Activated B cell treated with CpG ODN at 0.5 μM for 24 hours (primary cell): ENCODE measurements at regions of chr15 and their contacts with region 1.

Region 1: DNA sequence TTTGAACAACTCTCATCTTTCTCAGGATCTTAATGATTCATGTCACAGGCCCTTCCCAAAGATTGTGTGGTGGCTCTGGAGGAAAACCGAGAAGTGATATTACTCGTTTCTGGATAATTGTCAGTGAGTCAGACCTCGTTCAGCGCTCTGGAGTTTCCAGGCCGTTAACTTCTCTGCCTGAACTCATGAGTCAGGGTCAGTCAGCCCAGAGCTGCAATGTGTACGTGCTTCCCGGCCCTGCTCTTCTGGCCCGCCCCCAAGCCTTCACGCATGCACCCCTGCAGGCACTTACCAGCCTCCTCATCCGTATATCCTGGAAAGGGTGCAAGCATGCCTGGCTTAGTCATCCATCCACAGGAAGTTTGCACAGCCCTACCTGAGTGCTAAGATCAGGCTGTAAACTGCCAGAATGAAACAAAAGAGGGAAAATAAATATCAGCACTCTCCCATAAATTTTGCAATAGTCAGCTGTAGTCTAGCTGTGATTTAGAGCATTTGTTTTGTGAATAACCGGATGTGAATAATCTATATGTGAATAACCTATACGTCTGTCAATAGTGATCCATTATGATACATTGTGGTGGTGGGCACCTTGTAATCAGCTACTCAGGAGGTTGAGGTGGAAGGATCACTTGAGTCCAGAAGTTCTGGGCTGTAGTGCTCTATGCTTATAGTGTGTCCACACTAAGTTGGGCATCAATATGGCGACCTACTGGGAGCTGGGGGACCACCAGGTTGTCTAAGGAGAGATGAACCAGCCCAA is 35.3 kb upstream of the SEMA4B start:
- DNase-seq: no peak
- ATAC-seq: peak; percentile 75
- H3K4me3 Mint-ChIP-seq: peak overlapping the region; percentile 44
- H3K27ac Mint-ChIP-seq: peak overlapping the region; percentile 56
- H3K4me1 Mint-ChIP-seq: peaks cover 49% of the 10 kb centered on the region
- H3K27me3 Mint-ChIP-seq: no peaks in the 10 kb centered on the region
- CTCF ChIP-seq: no peak

Region 2: GRCh38 chr15:90126022-90126421 is 39.8 kb before region 1 on chr15:
- CTCF ChIA-PET with region 1: no interaction called
- POLR2A ChIA-PET with region 1: no interaction called
- intact Hi-C with region 1: no loop called
- DNase-seq: no peak
- ATAC-seq: no peak
- H3K4me3 Mint-ChIP-seq: no peak overlapping the region
- H3K27ac Mint-ChIP-seq: no peak overlapping the region
- H3K4me1 Mint-ChIP-seq: peaks cover 1% of the 10 kb centered on the region
- H3K27me3 Mint-ChIP-seq: peaks cover 8% of the 10 kb centered on the region
- CTCF ChIP-seq: no peak

Region 3: GRCh38 chr15:90184786-90185569 is 19.1 kb after region 1 on chr15:
- CTCF ChIA-PET with region 1: interaction called, 3 read pairs
- POLR2A ChIA-PET with region 1: interaction called, 14 read pairs
- intact Hi-C with region 1: loop called (anchors 2 kb)
- DNase-seq: peak; percentile 77
- ATAC-seq: peak; percentile 77
- H3K4me3 Mint-ChIP-seq: peak overlapping the region; percentile 90
- H3K27ac Mint-ChIP-seq: peak overlapping the region; percentile 88
- H3K4me1 Mint-ChIP-seq: peaks cover 75% of the 10 kb centered on the region
- H3K27me3 Mint-ChIP-seq: no peaks in the 10 kb centered on the region
- CTCF ChIP-seq: no peak

Region 4: GRCh38 chr15:90201130-90201949 is 35.5 kb after region 1 on chr15 and contains the start of gene SEMA4B:
- CTCF ChIA-PET with region 1: interaction called, 18 read pairs
- POLR2A ChIA-PET with region 1: interaction called, 25 read pairs
- intact Hi-C with region 1: no loop called
- DNase-seq: peak; percentile 81
- ATAC-seq: peak; percentile 90
- H3K4me3 Mint-ChIP-seq: peak within 1 kb of the TSS; percentile 93
- H3K27ac Mint-ChIP-seq: peak within 1 kb of the TSS; percentile 93
- H3K4me1 Mint-ChIP-seq: peaks cover 77% of the 10 kb centered on the region
- H3K27me3 Mint-ChIP-seq: no peaks in the 10 kb centered on the region
- CTCF ChIP-seq: no peak
- total RNA-seq, gene SEMA4B: 68.1 and 85.1 TPM in 2 replicates

Region 5: DNA sequence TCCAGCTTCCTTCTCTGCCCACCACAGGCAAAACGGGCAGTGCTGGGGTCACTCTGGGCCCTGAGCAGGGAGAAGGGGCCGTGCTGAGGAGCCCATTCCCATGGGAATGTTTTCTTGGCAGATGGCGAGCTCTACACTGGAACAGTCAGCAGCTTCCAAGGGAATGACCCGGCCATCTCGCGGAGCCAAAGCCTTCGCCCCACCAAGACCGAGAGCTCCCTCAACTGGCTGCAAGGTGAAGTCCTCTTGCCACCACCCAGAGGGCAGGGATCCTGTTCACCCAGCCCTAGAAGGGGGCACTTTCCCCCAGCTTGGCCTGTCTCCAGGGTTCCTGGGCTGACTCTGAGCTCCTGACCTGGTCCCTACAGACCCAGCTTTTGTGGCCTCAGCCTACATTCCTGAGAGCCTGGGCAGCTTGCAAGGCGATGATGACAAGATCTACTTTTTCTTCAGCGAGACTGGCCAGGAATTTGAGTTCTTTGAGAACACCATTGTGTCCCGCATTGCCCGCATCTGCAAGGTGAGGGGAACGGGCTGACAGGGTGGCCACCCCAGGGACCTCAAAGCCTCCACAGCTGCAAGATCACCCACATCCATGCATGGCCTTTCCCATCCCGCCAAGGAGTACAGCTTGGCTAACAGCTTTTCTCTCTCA is 55.5 kb after region 1 on chr15:
- CTCF ChIA-PET with region 1: no interaction called
- POLR2A ChIA-PET with region 1: interaction called, 9 read pairs
- intact Hi-C with region 1: loop called (anchors 1 kb)
- DNase-seq: no peak
- ATAC-seq: peak; percentile 43
- H3K4me3 Mint-ChIP-seq: no peak overlapping the region
- H3K27ac Mint-ChIP-seq: peak overlapping the region; percentile 56
- H3K4me1 Mint-ChIP-seq: peaks cover 49% of the 10 kb centered on the region
- H3K27me3 Mint-ChIP-seq: no peaks in the 10 kb centered on the region
- CTCF ChIP-seq: no peak

Region 6: GRCh38 chr15:90286678-90287077 is 120.8 kb after region 1 on chr15:
- CTCF ChIA-PET with region 1: interaction called, 4 read pairs
- POLR2A ChIA-PET with region 1: no interaction called
- intact Hi-C with region 1: loop called (anchors 1 kb)
- DNase-seq: no peak
- ATAC-seq: peak; percentile 68
- H3K4me3 Mint-ChIP-seq: no peak overlapping the region
- H3K27ac Mint-ChIP-seq: no peak overlapping the region
- H3K4me1 Mint-ChIP-seq: peaks cover 3% of the 10 kb centered on the region
- H3K27me3 Mint-ChIP-seq: no peaks in the 10 kb centered on the region
- CTCF ChIP-seq: no peak

Region 7: DNA sequence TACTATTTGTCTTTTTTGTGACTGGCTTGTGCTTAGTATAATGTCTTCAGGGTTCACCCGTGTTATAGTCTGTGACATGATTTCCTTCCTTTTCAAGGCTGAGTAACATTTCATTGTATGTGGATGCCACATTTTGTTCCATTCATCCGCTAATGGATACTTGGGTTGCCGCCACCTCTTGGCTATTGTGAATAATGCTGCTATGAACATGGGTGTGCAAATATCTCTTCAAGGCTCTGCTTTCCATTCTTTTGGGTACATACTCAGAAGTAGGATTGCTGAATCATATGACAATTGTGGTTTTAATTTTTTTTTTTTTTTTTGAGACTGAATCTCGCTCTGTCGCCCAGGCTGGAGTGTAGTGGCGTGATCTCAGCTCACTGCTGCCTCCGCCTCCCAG is 379.3 kb after region 1 on chr15:
- CTCF ChIA-PET with region 1: no interaction called
- POLR2A ChIA-PET with region 1: no interaction called
- intact Hi-C with region 1: no loop called
- DNase-seq: no peak
- ATAC-seq: no peak
- H3K4me3 Mint-ChIP-seq: no peak overlapping the region
- H3K27ac Mint-ChIP-seq: no peak overlapping the region
- H3K4me1 Mint-ChIP-seq: peaks cover 31% of the 10 kb centered on the region
- H3K27me3 Mint-ChIP-seq: no peaks in the 10 kb centered on the region
- CTCF ChIP-seq: no peak